K562 (cell line): ENCODE measurements at regions of chr13 and their contacts with region 1.

Region 1: GRCh38 chr13:101325423-101325822 is 90.9 kb downstream of the NALCN start:
- DNase-seq: no peak
- ATAC-seq: no peak
- H3K4me3 ChIP-seq: no peak overlapping the region
- H3K27ac ChIP-seq: no peak overlapping the region
- H3K4me1 ChIP-seq: no peaks in the 10 kb centered on the region
- H3K27me3 ChIP-seq: no peaks in the 10 kb centered on the region
- CTCF ChIP-seq: no peak
- EP300 ChIP-seq: no peak
- POLR2A ChIP-seq: no peak
- RAD21 ChIP-seq: no peak

Region 2: GRCh38 chr13:100594731-100595130 is 730.7 kb before region 1 on chr13:
- CTCF ChIA-PET with region 1: no interaction called
- POLR2A ChIA-PET with region 1: no interaction called
- in situ Hi-C with region 1: no loop called
- intact Hi-C with region 1: no loop called
- DNase-seq: peak; percentile 16 to 53 (median 20)
- ATAC-seq: peak; percentile 88
- H3K4me3 ChIP-seq: no peak overlapping the region
- H3K27ac ChIP-seq: no peak overlapping the region
- H3K4me1 ChIP-seq: peaks cover 0 to 2% of the 10 kb centered on the region in 2 experiments; a peak in 2 of 5 replicates
- H3K27me3 ChIP-seq: no peaks in the 10 kb centered on the region
- CTCF ChIP-seq: peak; percentile 50 to 61 (median 54)
- EP300 ChIP-seq: no peak
- POLR2A ChIP-seq: no peak
- RAD21 ChIP-seq: no peak

Region 3: DNA sequence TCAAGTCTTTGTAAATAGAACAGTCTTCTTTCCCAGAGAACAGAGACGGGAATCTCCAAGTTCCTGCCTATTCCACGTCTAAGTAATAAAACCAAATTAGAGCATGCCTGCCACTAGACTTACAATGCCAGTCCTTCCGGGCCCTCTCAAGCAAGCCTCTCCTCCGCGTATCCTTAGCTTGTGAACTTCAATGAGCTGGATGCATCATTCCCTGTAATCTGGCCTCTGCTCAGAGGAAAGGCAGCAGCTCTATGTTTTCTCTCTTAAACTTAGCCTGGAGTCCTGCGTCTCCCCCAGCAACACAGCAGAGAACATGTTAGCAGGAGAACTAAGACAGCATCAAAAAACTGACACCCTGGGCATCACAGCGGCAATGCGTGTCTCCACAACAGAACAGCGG is 82.7 kb after region 1 on chr13:
- CTCF ChIA-PET with region 1: no interaction called
- POLR2A ChIA-PET with region 1: no interaction called
- in situ Hi-C with region 1: loop called (anchors 5 kb)
- intact Hi-C with region 1: no loop called
- DNase-seq: no peak
- ATAC-seq: no peak
- H3K4me3 ChIP-seq: no peak overlapping the region
- H3K27ac ChIP-seq: no peak overlapping the region
- H3K4me1 ChIP-seq: no peaks in the 10 kb centered on the region
- H3K27me3 ChIP-seq: no peaks in the 10 kb centered on the region
- CTCF ChIP-seq: no peak
- EP300 ChIP-seq: no peak
- POLR2A ChIP-seq: no peak
- RAD21 ChIP-seq: no peak